Naive thymus-derived CD4-positive, alpha-beta T cell (primary cell): ENCODE measurements at regions of chr10 and their contacts with region 1.

Region 1: GRCh38 chr10:61284222-61284890 is 168.8 kb downstream of the TMEM26 start:
- DNase-seq: peak in 6 of 9 donors; percentile 7 to 43 (median 26)
- ATAC-seq: peak; percentile 45
- H3K4me3 ChIP-seq: no peak overlapping the region
- H3K4me3 Mint-ChIP-seq: peak overlapping the region in 9 of 10 donors; percentile 12 to 81 (median 66)
- H3K27ac ChIP-seq: no peak overlapping the region
- H3K27ac Mint-ChIP-seq: peak overlapping the region in 1 of 9 donors; percentile 7
- H3K4me1 ChIP-seq: peaks cover 9 to 12% of the 10 kb centered on the region in 2 donors
- H3K4me1 Mint-ChIP-seq: peaks cover 13 to 24% (median 20%) of the 10 kb centered on the region in 7 donors
- H3K27me3 ChIP-seq: no peaks in the 10 kb centered on the region
- H3K27me3 Mint-ChIP-seq: peaks cover 0 to 22% (median 0%) of the 10 kb centered on the region in 5 donors

Region 2: DNA sequence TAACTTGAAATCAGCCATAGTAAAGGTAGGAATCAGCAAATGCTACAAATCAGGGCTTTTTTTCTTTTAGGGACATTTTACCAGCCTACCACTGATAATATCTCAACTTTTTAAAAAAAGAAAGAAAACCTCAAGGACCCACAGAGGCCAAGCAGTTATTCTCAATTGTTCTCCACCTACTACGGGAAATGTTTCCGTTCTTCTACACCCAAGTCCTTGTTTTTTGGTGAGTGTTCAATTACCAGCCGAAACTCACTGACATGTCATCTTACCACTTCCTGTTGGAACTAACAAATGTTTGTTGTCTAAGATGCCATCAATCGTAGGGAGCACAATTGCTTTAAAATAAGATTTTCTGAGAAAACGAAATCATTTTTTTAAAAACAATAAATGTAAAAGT is 556.3 kb before region 1 on chr10:
- CTCF ChIA-PET with region 1: no interaction called
- POLR2A ChIA-PET with region 1: no interaction called
- intact Hi-C with region 1: loop called in 1 of 2 experiments (anchors 5 kb)
- DNase-seq: peak in 7 of 9 donors; percentile 51 to 85 (median 78)
- ATAC-seq: peak; percentile 73
- H3K4me3 ChIP-seq: peak overlapping the region; percentile 57
- H3K4me3 Mint-ChIP-seq: peak overlapping the region; percentile 74 to 94 (median 83)
- H3K27ac ChIP-seq: peak overlapping the region; percentile 89
- H3K27ac Mint-ChIP-seq: peak overlapping the region; percentile 84 to 98 (median 94)
- H3K4me1 ChIP-seq: peaks cover 28 to 64% of the 10 kb centered on the region in 2 donors
- H3K4me1 Mint-ChIP-seq: peaks cover 35 to 86% (median 77%) of the 10 kb centered on the region in 7 donors
- H3K27me3 ChIP-seq: no peaks in the 10 kb centered on the region
- H3K27me3 Mint-ChIP-seq: peaks cover 0 to 7% (median 0%) of the 10 kb centered on the region in 5 donors

Region 3: DNA sequence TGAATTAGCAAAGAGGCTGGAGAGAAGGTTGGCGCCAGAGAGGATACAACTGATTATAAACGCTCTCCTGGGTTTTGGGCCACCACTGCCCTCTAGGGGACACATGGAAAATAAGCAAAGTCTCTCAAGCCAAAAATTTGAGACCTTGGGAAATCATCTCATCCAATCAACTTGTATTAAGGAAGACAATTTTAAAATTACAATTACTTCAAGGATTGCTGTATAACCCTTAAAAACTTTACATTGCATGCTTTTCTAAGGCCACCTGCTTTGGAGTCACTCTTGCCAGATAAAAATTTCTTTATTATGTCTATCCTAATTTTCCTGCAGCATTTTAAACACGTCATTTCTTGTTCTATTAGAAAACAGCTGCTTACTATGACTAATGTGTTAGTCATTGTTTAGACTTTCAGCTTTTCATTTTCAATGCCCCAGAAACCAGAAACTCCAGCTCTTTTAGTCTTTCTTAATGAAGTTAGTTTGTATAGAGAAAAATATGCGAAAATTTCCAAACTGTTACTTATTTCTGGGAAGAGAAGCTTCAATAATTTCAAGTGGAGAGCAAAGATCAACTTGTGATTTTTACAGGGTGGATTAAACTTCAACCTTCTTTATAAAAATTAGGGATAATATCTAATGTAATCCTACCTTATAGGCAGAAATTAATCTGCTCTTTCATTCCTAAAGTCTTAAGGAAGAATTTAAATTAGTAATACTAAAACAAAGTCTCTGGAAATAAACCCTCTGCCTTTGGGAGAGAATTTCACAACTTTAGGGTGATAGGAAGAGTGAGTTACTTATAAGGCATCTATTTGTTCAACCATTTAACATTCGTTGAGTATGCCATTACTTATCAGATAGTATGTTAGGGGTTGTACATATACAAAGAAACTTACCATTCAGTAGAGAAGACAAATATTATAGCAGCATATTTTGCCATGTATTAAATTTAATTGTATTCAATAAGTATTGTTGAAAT is 319.8 kb before region 1 on chr10:
- CTCF ChIA-PET with region 1: no interaction called
- POLR2A ChIA-PET with region 1: no interaction called
- intact Hi-C with region 1: loop called (anchors 5 to 10 kb)
- DNase-seq: peak in 7 of 9 donors; percentile 9 to 47 (median 29)
- ATAC-seq: peak; percentile 74
- H3K4me3 ChIP-seq: no peak overlapping the region
- H3K4me3 Mint-ChIP-seq: no peak overlapping the region
- H3K27ac ChIP-seq: no peak overlapping the region
- H3K27ac Mint-ChIP-seq: no peak overlapping the region
- H3K4me1 ChIP-seq: no peaks in the 10 kb centered on the region
- H3K4me1 Mint-ChIP-seq: peaks cover 0 to 18% (median 0%) of the 10 kb centered on the region in 7 donors
- H3K27me3 ChIP-seq: no peaks in the 10 kb centered on the region
- H3K27me3 Mint-ChIP-seq: peaks cover 24 to 30% (median 26%) of the 10 kb centered on the region in 5 donors

Region 4: GRCh38 chr10:61835069-61835945 is 551.0 kb after region 1 on chr10:
- CTCF ChIA-PET with region 1: no interaction called
- POLR2A ChIA-PET with region 1: no interaction called
- intact Hi-C with region 1: loop called in 1 of 2 experiments (anchors 1 kb)
- DNase-seq: peak in 4 of 9 donors; percentile 5 to 30 (median 14)
- ATAC-seq: no peak
- H3K4me3 ChIP-seq: no peak overlapping the region
- H3K4me3 Mint-ChIP-seq: no peak overlapping the region
- H3K27ac ChIP-seq: no peak overlapping the region
- H3K27ac Mint-ChIP-seq: peak overlapping the region in 1 of 9 donors; percentile 10
- H3K4me1 ChIP-seq: no peaks in the 10 kb centered on the region
- H3K4me1 Mint-ChIP-seq: peaks cover 0 to 15% (median 5%) of the 10 kb centered on the region in 7 donors
- H3K27me3 ChIP-seq: no peaks in the 10 kb centered on the region
- H3K27me3 Mint-ChIP-seq: peaks cover 0 to 4% (median 0%) of the 10 kb centered on the region in 5 donors

Region 5: GRCh38 chr10:62268399-62269114 is 984.2 kb after region 1 on chr10 and contains the start of gene RTKN2:
- CTCF ChIA-PET with region 1: no interaction called
- POLR2A ChIA-PET with region 1: no interaction called
- intact Hi-C with region 1: loop called in 1 of 2 experiments (anchors 10 kb)
- DNase-seq: peak; percentile 52 to 76 (median 64)
- ATAC-seq: peak; percentile 89
- H3K4me3 ChIP-seq: peak within 1 kb of the TSS; percentile 69
- H3K4me3 Mint-ChIP-seq: peak within 1 kb of the TSS; percentile 84 to 96 (median 88)
- H3K27ac ChIP-seq: peak within 1 kb of the TSS; percentile 12
- H3K27ac Mint-ChIP-seq: peak within 1 kb of the TSS in 8 of 9 donors; percentile 8 to 75 (median 46)
- H3K4me1 ChIP-seq: peaks cover 0 to 5% of the 10 kb centered on the region in 2 donors
- H3K4me1 Mint-ChIP-seq: peaks cover 9 to 19% (median 14%) of the 10 kb centered on the region in 7 donors
- H3K27me3 ChIP-seq: peaks cover 0 to 9% of the 10 kb centered on the region in 2 donors
- H3K27me3 Mint-ChIP-seq: peaks cover 4 to 43% (median 16%) of the 10 kb centered on the region in 5 donors
- total RNA-seq, gene RTKN2: 1.4 to 7.8 (median 3.0) TPM